Ascending aorta (tissue), 2 donors: ENCODE measurements at regions of chr14 and their contacts with region 1.

Region 1: DNA sequence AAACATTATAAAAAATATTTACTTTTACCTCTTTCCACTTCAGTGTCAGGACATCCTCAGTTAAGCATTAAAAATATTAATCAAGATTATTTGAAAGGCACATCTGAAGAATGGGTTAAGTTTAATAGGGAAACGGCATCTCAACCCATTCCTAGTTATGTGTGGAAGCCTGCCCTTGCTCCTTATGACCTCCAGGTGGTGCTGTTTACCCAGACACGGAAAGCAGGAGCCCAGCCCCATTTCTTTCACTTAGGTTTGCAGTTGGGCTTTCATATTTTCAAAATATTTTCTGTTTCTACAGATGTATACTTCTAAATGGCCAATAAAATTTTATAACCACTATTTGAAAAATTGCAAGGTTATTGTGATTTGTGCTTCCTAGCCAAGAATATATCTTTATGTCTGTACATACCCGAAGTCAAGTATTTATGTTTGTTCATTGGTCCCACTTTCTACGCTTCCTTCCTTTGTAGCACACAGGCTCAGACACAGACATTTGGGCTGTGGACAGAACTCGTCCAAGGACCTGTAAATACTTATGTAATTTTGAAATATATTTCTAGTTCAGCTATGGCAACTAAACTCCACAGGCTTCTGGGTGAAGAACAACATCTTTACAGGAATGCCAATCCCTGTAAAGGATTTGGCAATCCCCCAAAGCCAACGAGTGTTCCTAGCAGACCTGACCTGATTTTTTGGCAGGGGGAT is 247.1 kb downstream of the AKAP6 start:
- DNase-seq: no peak
- H3K4me3 ChIP-seq: peak overlapping the region in 1 of 2 donors; percentile 47
- H3K27ac ChIP-seq: peak overlapping the region in 1 of 2 donors; percentile 1
- H3K4me1 ChIP-seq: peaks cover 0 to 2% of the 10 kb centered on the region in 2 donors
- H3K27me3 ChIP-seq: no peaks in the 10 kb centered on the region
- CTCF ChIP-seq: peak; percentile 86 to 96 (median 94)

Region 2: DNA sequence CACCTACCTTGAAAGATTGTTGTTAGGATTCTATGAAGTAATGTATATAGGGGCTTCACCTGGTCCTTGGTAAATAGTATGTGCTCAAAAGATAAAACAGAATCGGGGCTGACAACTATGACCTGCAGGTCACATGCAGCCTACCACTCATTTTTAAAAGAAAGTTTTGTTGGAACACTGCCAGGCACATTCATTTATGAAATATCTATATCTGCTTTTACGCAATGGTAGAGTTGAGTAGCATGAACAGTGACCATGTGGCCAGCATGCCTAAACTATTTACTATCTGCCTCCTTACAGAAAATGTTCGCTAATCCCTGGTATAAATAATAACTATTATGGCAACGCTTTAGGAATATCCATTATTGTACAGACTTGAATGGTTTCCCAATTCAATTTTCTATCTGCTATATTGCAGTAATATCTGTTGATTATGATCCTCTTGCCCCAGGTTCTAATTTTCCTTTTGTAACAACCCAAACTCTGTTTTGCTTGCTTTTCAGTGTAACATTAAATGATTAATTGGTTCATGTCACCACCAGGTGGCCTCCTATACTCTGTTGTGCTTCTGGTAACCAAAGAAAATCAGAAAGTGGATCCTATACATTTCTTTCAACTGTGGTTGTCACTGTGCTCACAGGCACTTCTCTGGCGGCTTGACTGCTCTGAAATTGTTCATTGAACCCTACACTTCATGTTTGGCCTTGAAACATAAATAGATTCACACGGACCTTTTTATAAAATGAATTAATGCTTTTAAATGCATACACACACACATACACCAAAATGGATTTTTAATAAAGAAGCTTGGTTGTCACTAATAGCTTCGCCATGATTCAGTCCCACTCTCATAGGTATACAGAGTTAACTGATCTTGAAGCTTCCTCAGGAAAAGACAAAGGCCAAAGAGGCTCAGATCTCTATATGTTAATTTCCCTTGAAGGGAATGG is 134.8 kb after region 1 on chr14:
- intact Hi-C with region 1: loop called (anchors 5 kb)
- DNase-seq: no peak
- H3K4me3 ChIP-seq: peak overlapping the region in 1 of 2 donors; percentile 3
- H3K27ac ChIP-seq: peak overlapping the region in 1 of 2 donors; percentile 81
- H3K4me1 ChIP-seq: peaks cover 0 to 28% of the 10 kb centered on the region in 2 donors
- H3K27me3 ChIP-seq: no peaks in the 10 kb centered on the region
- CTCF ChIP-seq: peak; percentile 23 to 56 (median 29)

Region 3: GRCh38 chr14:32761381-32761968 is 185.2 kb after region 1 on chr14:
- intact Hi-C with region 1: loop called (anchors 5 kb)
- DNase-seq: no peak
- H3K4me3 ChIP-seq: peak overlapping the region in 1 of 2 donors; percentile 6
- H3K27ac ChIP-seq: peak overlapping the region; percentile 61 to 62
- H3K4me1 ChIP-seq: peaks cover 3 to 25% of the 10 kb centered on the region in 2 donors
- H3K27me3 ChIP-seq: no peaks in the 10 kb centered on the region
- CTCF ChIP-seq: no peak

Region 4: GRCh38 chr14:32826404-32827082 is 250.3 kb after region 1 on chr14:
- intact Hi-C with region 1: loop called (anchors 1 kb)
- DNase-seq: no peak
- H3K4me3 ChIP-seq: peak overlapping the region in 1 of 2 donors; percentile 23
- H3K27ac ChIP-seq: peak overlapping the region in 1 of 2 donors; percentile 54
- H3K4me1 ChIP-seq: no peaks in the 10 kb centered on the region
- H3K27me3 ChIP-seq: no peaks in the 10 kb centered on the region
- CTCF ChIP-seq: peak in 1 of 3 experiments; percentile 43

Region 5: GRCh38 chr14:32939254-32940065 is 363.2 kb after region 1 on chr14:
- intact Hi-C with region 1: loop called (anchors 5 kb)
- DNase-seq: peak in 1 of 2 donors; percentile 86
- H3K4me3 ChIP-seq: peak overlapping the region; percentile 72 to 80
- H3K27ac ChIP-seq: peak overlapping the region; percentile 81 to 94
- H3K4me1 ChIP-seq: peaks cover 3 to 10% of the 10 kb centered on the region in 2 donors
- H3K27me3 ChIP-seq: no peaks in the 10 kb centered on the region
- CTCF ChIP-seq: no peak

Region 6: DNA sequence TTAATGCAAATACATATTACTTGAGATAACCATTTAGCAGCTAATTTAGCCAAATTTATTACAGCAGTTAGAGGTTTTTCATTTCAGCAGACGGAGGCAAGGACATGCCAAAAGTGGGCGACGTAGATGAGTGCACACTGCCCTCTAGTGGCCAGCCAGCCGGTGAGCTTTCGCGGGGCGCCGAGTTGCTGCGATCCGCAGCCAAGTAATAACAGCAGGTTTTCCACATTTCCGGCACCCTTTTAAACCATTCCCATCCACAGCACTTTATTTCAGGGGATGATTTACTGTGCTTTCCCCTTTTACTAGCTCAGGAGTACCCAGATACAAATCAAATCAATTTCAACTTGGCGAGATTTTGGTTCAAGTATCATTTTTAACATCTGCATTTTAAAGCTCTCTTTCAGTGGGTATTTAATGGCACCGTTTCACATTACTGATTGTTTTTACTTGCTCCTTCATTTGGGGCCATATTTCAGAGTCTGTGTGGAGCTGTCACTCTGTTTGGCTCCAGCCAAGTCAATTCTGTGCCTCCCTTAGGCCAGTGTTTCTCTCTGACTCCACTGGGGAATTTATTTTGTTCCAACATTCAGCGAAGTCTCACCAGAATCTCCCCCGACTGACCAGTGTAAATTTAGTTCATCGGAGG is 1216.6 kb after region 1 on chr14:
- intact Hi-C with region 1: loop called (anchors 2 kb)
- DNase-seq: peak in 1 of 2 donors; percentile 81
- H3K4me3 ChIP-seq: peak overlapping the region; percentile 29 to 54
- H3K27ac ChIP-seq: peak overlapping the region; percentile 44
- H3K4me1 ChIP-seq: no peaks in the 10 kb centered on the region
- H3K27me3 ChIP-seq: no peaks in the 10 kb centered on the region
- CTCF ChIP-seq: peak; percentile 74 to 94 (median 94)